Heart right ventricle (tissue), 16 donors: ENCODE measurements at regions of chr2 and their contacts with region 1.

Region 1: GRCh38 chr2:63364866-63365265 is 223.4 kb downstream of the WDPCP start:
- DNase-seq: no peak
- ATAC-seq: no peak
- H3K4me3 ChIP-seq: no peak overlapping the region
- H3K27ac ChIP-seq: no peak overlapping the region
- H3K4me1 ChIP-seq: no peaks in the 10 kb centered on the region
- H3K27me3 ChIP-seq: no peaks in the 10 kb centered on the region
- CTCF ChIP-seq: no peak

Region 2: GRCh38 chr2:63334910-63335309 is 30.0 kb before region 1 on chr2:
- intact Hi-C with region 1: loop called in 1 of 10 experiments (anchors 1 kb)
- DNase-seq: no peak
- ATAC-seq: no peak
- H3K4me3 ChIP-seq: no peak overlapping the region
- H3K27ac ChIP-seq: no peak overlapping the region
- H3K4me1 ChIP-seq: no peaks in the 10 kb centered on the region
- H3K27me3 ChIP-seq: no peaks in the 10 kb centered on the region
- CTCF ChIP-seq: no peak